A549 (cell line): ENCODE measurements at regions of chr19 and their contacts with region 1.

Region 1: DNA sequence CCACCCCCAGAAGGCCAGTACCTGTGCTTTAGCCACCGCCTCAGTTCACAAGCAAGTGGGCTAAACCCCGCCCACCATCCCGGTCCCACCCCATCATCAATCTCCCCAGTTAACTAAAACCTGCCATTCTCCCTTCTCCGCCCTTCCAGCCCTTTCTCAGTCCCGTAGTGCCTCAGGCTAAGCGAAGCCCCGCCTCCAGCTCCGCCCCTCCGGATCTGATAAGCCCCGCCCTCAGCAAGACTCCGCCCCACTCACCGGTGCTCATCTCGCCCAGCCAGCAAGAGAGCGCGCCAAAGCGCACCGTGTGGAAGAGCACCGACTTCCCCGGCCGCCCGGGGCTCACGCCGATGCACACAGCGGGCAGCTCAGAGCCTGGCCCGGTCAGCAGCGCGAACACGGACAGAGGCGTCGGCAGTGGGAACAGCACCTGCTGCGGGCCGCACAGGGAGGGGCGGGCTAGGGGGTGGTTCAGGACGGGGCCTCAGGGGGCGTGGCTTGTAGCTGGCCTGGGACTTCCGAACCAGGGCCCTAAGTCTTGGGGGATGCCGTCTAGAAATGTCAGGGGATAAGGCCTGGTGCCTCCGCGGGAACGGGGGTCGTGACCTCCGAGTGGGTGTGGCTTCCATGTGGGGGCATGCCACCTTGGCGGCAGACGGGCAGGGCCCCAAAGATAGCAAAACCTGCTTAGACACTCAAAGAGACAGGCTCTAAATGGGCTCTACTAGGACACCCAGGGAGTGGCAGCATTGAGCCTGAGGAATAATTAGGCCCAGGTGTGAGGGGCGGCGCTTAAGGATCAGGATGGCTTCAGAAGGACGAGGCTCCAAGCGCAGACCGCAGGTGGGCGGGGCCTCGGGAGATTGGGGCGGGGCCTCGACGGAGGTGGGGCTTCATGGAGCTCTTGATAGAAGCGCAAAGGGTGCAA is 21.4 kb downstream of the MAP4K1 start:
- DNase-seq: peak; percentile 84 to 90
- ATAC-seq: peak; percentile 84 to 89
- H3K4me3 ChIP-seq: peak overlapping the region; percentile 42
- H3K27ac ChIP-seq: peak overlapping the region; percentile 19 to 56; a peak in 4 of 6 replicates
- H3K4me1 ChIP-seq: 0 out of 3 replicates have a peak, but pooled peaks cover 5% of the 10 kb centered on the region
- CTCF ChIP-seq: no peak
- EP300 ChIP-seq: 0 out of 5 replicates have a peak, but pooled peaks of 1 of the 2 experiments have one; percentile 12
- POLR2A ChIP-seq: no peak
- RAD21 ChIP-seq: no peak

Region 2: DNA sequence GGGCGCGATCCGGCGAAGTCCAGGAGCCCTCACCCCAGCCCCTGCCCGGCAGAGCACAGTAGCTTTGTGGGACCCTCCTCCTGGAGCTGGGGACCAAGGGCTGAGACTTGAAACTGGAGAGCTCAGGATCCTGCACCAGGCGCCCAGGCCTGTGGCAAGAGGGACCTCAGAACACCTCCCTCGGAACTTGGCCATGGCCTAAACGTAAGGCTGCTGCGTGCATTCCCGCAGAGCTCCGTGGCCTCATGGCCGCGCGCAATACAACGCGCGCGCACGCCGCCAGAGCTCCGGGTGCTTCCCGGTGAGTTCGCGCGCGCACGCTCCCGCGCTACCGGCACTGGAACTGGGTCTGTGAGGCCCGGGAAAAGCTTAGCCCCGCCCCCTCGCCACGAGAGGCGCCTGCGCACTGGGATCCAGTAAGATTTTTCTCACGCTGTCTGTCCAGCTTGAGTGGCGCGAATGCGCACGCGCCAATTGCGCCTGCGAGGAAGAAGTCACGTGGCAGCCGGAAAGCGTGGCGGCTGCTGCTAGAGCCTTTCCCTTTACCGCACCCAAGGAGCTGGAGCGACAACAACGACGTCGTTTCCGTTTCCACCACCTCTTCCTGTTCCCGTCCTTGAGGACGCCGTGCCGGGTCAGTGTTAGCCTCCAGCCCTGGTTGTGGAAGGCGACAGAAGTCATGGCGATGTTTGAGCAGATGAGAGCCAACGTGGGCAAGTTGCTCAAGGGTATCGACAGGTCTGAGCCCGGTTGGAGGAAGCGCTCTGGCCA is 22.5 kb after region 1 on chr19 and contains the start of gene EIF3K:
- CTCF ChIA-PET with region 1: interaction called, 12 read pairs
- POLR2A ChIA-PET with region 1: interaction called, 13 read pairs
- DNase-seq: peak; percentile 100
- ATAC-seq: peak; percentile 87 to 93
- H3K4me3 ChIP-seq: peak within 1 kb of the TSS; percentile 86
- H3K27ac ChIP-seq: peak within 1 kb of the TSS; percentile 84 to 87
- H3K4me1 ChIP-seq: peaks cover 14% of the 10 kb centered on the region
- CTCF ChIP-seq: no peak
- EP300 ChIP-seq: no peak
- POLR2A ChIP-seq: peak; percentile 85
- RAD21 ChIP-seq: peak in 1 of 2 experiments; percentile 10; a peak in 1 of 5 replicates
- polyA plus RNA-seq, gene EIF3K: 419 and 491 TPM in 2 replicates

Region 3: GRCh38 chr19:38675611-38676010 is 79.3 kb after region 1 on chr19:
- CTCF ChIA-PET with region 1: no interaction called
- POLR2A ChIA-PET with region 1: no interaction called
- DNase-seq: no peak
- ATAC-seq: peak in 1 of 2 experiments; percentile 1; a peak in 1 of 6 replicates
- H3K4me3 ChIP-seq: no peak overlapping the region
- H3K27ac ChIP-seq: peak overlapping the region; percentile 8 to 93; a peak in 5 of 6 replicates
- H3K4me1 ChIP-seq: peaks cover 90% of the 10 kb centered on the region
- CTCF ChIP-seq: no peak
- EP300 ChIP-seq: no peak
- POLR2A ChIP-seq: no peak
- RAD21 ChIP-seq: peak in 1 of 2 experiments; percentile 25; a peak in 2 of 5 replicates